ENCODE measurements at regions of chr12 and their contacts with region 1.

Region 1: GRCh38 chr12:575948-576612 is 87.2 kb downstream of the NINJ2 start:
- DNase-seq: peak; percentile 83
- H3K4me3 ChIP-seq: peak overlapping the region; percentile 18 to 41
- H3K27ac ChIP-seq: peak overlapping the region in 1 of 2 donors; percentile 61
- H3K4me1 ChIP-seq: peaks cover 31% of the 10 kb centered on the region
- H3K27me3 ChIP-seq: no peaks in the 10 kb centered on the region
- CTCF ChIP-seq: peak; percentile 99 to 100 (median 100)
- POLR2A ChIP-seq: no peak

Region 2: DNA sequence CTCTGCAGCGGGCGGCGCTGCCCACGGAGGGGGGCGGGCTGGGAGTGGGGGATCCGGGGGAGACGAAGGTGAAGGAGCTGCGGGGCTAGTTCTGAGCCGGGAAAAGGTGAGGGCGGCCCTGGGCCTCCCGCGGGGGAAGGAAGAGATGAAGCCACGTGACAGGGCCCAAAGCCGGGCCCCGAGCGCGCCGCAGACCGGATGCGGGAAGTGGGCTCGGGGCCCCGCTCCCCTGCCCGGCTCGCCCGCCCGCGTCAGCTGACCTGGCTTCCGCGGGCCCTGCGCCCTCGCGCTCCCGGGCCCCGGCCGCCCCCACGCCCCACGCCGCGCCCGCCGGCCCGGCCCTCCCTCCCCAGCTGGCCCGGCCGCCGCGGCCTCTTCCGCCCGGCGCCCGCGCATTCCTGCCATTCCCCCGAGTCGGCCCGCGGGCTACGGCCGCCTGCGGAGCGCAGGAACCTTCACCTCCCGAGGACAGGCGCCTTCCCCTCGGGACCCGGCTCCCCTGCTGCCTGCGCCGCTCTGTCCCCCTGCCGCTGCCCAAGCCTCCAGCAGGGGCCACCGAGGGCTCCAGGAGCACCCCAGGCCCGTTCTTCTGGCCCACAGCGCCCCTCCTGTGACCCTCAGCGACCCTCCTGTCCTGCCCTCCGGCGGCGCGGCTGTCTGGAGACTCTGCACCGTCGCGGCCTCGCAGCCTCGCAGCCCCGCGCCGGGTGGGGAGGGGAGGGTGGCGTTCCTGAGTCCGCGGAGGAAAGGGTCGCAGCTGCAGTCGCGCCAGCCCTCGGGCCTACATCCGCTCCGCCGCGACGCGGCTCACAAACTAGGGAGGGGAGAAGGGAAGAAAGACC is 66.8 kb after region 1 on chr12:
- intact Hi-C with region 1: loop called (anchors 10 kb)
- DNase-seq: peak; percentile 80
- H3K4me3 ChIP-seq: peak overlapping the region; percentile 58 to 70
- H3K27ac ChIP-seq: peak overlapping the region; percentile 94 to 97
- H3K4me1 ChIP-seq: peaks cover 30% of the 10 kb centered on the region
- H3K27me3 ChIP-seq: no peaks in the 10 kb centered on the region
- CTCF ChIP-seq: peak in 2 of 3 experiments; percentile 30 to 37
- POLR2A ChIP-seq: no peak

Region 3: GRCh38 chr12:946631-947030 is 370.6 kb after region 1 on chr12:
- intact Hi-C with region 1: no loop called
- DNase-seq: no peak
- H3K4me3 ChIP-seq: no peak overlapping the region
- H3K27ac ChIP-seq: no peak overlapping the region
- H3K4me1 ChIP-seq: no peaks in the 10 kb centered on the region
- H3K27me3 ChIP-seq: no peaks in the 10 kb centered on the region
- CTCF ChIP-seq: no peak
- POLR2A ChIP-seq: no peak